ENCODE measurements at regions of chr11 and their contacts with region 1.

Region 1: GRCh38 chr11:71342951-71343827 is 90.8 kb upstream of the SHANK2 start:
- DNase-seq: peak; percentile 72 to 81 (median 77)
- ATAC-seq: peak; percentile 85
- H3K4me3 ChIP-seq: no peak overlapping the region
- H3K27ac ChIP-seq: no peak overlapping the region
- H3K4me1 ChIP-seq: peaks cover 6% of the 10 kb centered on the region
- H3K27me3 ChIP-seq: no peaks in the 10 kb centered on the region
- CTCF ChIP-seq: peak; percentile 50 to 82 (median 77)
- POLR2A ChIP-seq: no peak

Region 2: GRCh38 chr11:71114124-71114851 is 228.9 kb before region 1 on chr11:
- intact Hi-C with region 1: loop called (anchors 10 kb)
- DNase-seq: no peak
- ATAC-seq: peak; percentile 34
- H3K4me3 ChIP-seq: no peak overlapping the region
- H3K27ac ChIP-seq: peak overlapping the region in 1 of 4 donors; percentile 46
- H3K4me1 ChIP-seq: peaks cover 8% of the 10 kb centered on the region
- H3K27me3 ChIP-seq: no peaks in the 10 kb centered on the region
- CTCF ChIP-seq: no peak
- POLR2A ChIP-seq: no peak

Measured in body of pancreas (tissue), 4 donors.